Esophagus muscularis mucosa (tissue), 4 donors: ENCODE measurements at regions of chr12 and their contacts with region 1.

Region 1: DNA sequence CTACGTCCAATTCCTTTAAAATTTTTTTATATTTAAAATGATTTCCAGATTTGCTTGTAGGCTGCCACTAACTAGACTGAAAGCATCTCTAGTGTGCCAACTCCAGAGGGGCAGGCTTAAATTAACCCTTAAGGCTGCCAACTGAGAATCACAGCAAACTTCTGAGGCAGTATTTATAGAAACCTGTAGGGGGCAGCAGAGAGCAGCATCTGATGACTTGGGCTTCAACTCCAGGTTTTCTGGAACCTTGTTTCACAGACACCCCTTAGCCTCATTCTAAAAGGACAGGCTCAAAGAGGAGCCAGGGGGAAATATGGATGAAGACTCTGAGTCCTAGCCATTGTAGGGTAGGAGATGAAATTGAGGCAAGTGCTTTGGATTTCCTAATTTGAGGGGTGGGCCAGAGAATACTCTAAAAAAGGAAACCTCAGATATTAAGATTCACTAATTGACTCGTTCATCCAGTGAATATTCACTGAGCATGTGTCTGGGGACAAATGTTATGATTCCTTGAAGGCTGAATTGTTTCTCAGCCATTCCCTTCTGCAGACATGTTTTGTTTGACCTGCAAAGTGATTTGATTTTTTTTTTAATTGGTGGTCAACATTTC is 63.3 kb upstream of the HSPB8 start:
- DNase-seq: no peak
- H3K4me3 ChIP-seq: no peak overlapping the region
- H3K27ac ChIP-seq: no peak overlapping the region
- H3K4me1 ChIP-seq: no peaks in the 10 kb centered on the region
- H3K27me3 ChIP-seq: peaks cover 0 to 7% (median 0%) of the 10 kb centered on the region in 4 donors
- CTCF ChIP-seq: peak; percentile 89
- EP300 ChIP-seq: no peak
- POLR2A ChIP-seq: no peak

Region 2: GRCh38 chr12:118979763-118980406 is 135.5 kb before region 1 on chr12:
- intact Hi-C with region 1: no loop called
- DNase-seq: no peak
- H3K4me3 ChIP-seq: no peak overlapping the region
- H3K27ac ChIP-seq: no peak overlapping the region
- H3K4me1 ChIP-seq: peaks cover 17 to 22% (median 20%) of the 10 kb centered on the region in 4 donors
- H3K27me3 ChIP-seq: peaks cover 0 to 75% (median 26%) of the 10 kb centered on the region in 4 donors
- CTCF ChIP-seq: peak; percentile 54 to 76 (median 56)
- EP300 ChIP-seq: no peak
- POLR2A ChIP-seq: no peak

Region 3: DNA sequence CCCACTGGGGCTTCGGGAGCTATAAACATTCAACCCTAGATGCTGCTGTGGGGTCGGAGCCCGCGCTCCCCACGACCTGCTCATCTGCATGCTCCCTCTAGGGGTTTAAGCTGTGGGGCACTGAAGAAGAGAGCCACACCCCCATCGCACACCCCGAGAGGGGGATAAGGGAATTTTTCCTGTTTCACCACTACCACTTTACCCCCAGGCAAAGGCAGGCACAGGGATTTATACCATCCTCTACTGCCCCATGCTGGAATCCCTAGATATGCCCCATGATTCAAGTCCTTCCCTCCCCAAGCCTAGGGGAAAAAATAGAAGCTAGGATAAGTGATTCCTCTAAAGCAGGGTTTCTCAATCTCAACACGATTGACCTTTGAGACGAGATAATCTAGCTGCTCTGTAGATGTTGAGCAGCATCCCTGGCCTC is 159.2 kb after region 1 on chr12:
- intact Hi-C with region 1: loop called (anchors 10 kb)
- DNase-seq: no peak
- H3K4me3 ChIP-seq: no peak overlapping the region
- H3K27ac ChIP-seq: no peak overlapping the region
- H3K4me1 ChIP-seq: no peaks in the 10 kb centered on the region
- H3K27me3 ChIP-seq: no peaks in the 10 kb centered on the region
- CTCF ChIP-seq: no peak
- EP300 ChIP-seq: no peak
- POLR2A ChIP-seq: no peak

Region 4: GRCh38 chr12:119319638-119320037 is 204.2 kb after region 1 on chr12:
- intact Hi-C with region 1: loop called (anchors 10 kb)
- DNase-seq: no peak
- H3K4me3 ChIP-seq: no peak overlapping the region
- H3K27ac ChIP-seq: peak overlapping the region in 1 of 4 donors; percentile 47
- H3K4me1 ChIP-seq: peaks cover 3 to 23% (median 10%) of the 10 kb centered on the region in 4 donors
- H3K27me3 ChIP-seq: no peaks in the 10 kb centered on the region
- CTCF ChIP-seq: peak; percentile 5 to 11 (median 8)
- EP300 ChIP-seq: no peak
- POLR2A ChIP-seq: no peak

Region 5: GRCh38 chr12:119412811-119413794 is 297.7 kb after region 1 on chr12:
- intact Hi-C with region 1: loop called (anchors 1 kb)
- DNase-seq: peak; percentile 94
- H3K4me3 ChIP-seq: no peak overlapping the region
- H3K27ac ChIP-seq: peak overlapping the region in 3 of 4 donors; percentile 20 to 56 (median 23)
- H3K4me1 ChIP-seq: peaks cover 6 to 38% (median 28%) of the 10 kb centered on the region in 4 donors
- H3K27me3 ChIP-seq: no peaks in the 10 kb centered on the region
- CTCF ChIP-seq: peak; percentile 90 to 94 (median 93)
- EP300 ChIP-seq: no peak
- POLR2A ChIP-seq: no peak

Region 6: GRCh38 chr12:119544765-119545625 is 429.6 kb after region 1 on chr12:
- intact Hi-C with region 1: loop called (anchors 2 kb)
- DNase-seq: no peak
- H3K4me3 ChIP-seq: no peak overlapping the region
- H3K27ac ChIP-seq: no peak overlapping the region
- H3K4me1 ChIP-seq: no peaks in the 10 kb centered on the region
- H3K27me3 ChIP-seq: peaks cover 0 to 25% (median 0%) of the 10 kb centered on the region in 4 donors
- CTCF ChIP-seq: peak; percentile 84 to 94 (median 84)
- EP300 ChIP-seq: no peak
- POLR2A ChIP-seq: no peak